BJ (cell line): ENCODE measurements at regions of chr14 and their contacts with region 1.

Region 1: DNA sequence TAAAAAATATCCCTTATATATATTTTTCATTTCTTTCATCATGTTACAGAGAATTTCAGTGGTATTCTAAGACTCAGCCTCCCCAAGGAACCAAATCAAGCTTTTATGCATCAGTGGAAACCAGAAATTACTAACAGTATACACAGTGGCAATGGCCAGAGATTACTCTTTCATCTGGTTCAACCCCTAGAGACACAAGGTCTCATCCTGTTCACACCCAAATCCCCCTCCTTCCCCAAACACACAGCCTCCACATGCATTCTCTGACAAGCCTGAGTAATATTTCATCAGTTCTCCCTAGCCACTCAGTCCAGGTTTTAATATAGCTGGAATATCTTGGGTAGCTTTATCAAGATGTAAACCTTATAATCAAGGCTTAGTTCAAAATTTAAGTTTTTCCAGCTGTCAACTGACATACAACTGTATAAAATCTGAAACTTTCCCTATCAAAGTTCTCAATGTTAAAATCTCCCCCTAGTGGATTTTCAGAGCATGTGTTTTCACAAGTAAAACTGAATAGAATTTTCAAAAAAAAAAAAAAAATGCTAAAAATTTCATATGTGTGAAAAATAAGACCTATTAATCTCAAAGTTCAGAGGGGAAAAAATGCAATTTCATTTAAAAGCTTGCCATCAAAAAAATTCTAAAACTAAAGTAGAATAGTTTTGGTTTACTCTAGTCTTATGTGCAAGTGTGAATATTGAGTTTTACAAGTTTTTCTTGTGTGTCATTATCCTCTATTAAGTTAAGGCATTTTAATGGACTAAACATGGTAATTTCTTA is 10.5 kb upstream of the SSTR1 start:
- DNase-seq: no peak
- H3K4me3 ChIP-seq: no peak overlapping the region
- H3K27me3 ChIP-seq: no peaks in the 10 kb centered on the region
- CTCF ChIP-seq: peak; percentile 53

Region 2: DNA sequence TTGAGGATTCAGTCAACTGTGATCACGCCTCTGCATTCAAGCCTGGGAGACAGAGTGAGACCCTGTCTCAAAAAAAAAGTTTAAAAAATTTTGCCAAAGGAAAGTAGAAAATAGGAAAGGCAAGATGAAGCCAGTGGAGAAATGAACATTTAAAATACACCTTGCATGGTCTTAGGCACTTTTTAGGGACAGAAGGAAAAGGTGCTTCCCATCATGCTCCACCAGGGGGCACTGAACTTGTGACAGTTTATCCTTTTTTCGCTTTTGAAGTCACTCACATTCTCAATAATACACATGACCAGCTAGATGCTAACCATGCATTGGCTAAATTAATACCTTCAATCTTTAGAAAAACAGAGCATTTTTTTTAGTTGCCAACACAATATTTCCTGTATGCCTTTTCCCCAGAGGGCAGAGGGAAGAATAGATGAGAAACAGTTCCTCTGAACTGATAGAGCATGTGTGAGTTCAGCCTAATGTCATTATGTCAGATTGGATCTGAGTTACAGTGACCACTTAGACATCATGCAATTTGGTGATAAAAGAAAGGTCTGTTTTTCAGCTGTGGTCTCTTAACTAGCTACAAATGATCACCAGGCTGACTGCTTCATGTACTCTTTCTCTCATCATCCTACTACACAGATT is 211.2 kb before region 1 on chr14:
- CTCF ChIA-PET with region 1: interaction called, 11 read pairs
- POLR2A ChIA-PET with region 1: no interaction called
- DNase-seq: no peak
- H3K4me3 ChIP-seq: no peak overlapping the region
- H3K27me3 ChIP-seq: no peaks in the 10 kb centered on the region
- CTCF ChIP-seq: peak; percentile 79

Region 3: GRCh38 chr14:38208618-38209562 is 11.7 kb after region 1 on chr14:
- CTCF ChIA-PET with region 1: interaction called, 17 read pairs
- POLR2A ChIA-PET with region 1: no interaction called
- DNase-seq: no peak
- H3K4me3 ChIP-seq: peak overlapping the region; percentile 85
- H3K27me3 ChIP-seq: no peaks in the 10 kb centered on the region
- CTCF ChIP-seq: peak; percentile 49

Region 4: DNA sequence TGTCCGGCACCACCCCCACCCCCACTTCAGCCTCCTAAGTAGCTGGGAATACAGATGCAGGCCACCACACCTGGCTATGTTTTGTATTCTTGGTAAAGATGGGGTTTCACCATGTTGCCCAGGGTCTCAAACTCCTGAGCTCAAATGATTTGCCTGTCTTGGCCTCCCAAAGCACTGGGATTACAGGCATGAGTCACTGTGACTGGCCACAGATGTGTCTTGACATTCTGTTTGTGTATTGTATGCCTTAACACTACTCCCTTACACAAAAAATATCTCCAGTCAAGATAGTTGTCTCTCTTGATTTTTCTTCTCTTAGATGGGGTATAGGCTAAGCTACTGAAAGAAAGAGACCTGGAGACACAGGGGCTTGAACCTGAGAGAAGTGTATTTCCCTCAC is 41.1 kb after region 1 on chr14:
- CTCF ChIA-PET with region 1: no interaction called
- POLR2A ChIA-PET with region 1: no interaction called
- DNase-seq: no peak
- H3K4me3 ChIP-seq: no peak overlapping the region
- H3K27me3 ChIP-seq: no peaks in the 10 kb centered on the region
- CTCF ChIP-seq: no peak

Region 5: DNA sequence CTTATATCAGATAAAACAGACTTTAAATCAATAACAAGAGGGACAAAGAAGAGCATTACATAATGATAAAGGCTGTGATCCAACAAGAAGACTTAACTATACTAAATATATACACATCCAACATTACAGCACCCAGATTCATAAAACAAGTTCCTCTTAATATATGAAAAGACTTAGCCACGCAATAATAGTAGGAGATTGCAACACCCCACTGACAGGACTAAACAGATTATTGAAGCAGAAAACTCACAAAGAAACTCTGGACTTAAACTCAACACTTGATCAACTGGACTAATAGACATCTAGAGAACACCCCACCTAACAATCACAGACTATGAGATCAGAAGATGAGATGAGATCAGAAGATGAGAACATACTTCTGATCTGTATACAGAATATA is 64.4 kb after region 1 on chr14:
- CTCF ChIA-PET with region 1: no interaction called
- POLR2A ChIA-PET with region 1: no interaction called
- DNase-seq: no peak
- H3K4me3 ChIP-seq: no peak overlapping the region
- H3K27me3 ChIP-seq: no peaks in the 10 kb centered on the region
- CTCF ChIP-seq: no peak